Ovary (tissue), 10 donors: ENCODE measurements at regions of chr12 and their contacts with region 1.

Region 1: GRCh38 chr12:17763366-17763765 is 326.6 kb downstream of the RERGL start:
- DNase-seq: no peak
- H3K4me3 ChIP-seq: no peak overlapping the region
- H3K27ac ChIP-seq: no peak overlapping the region
- H3K4me1 ChIP-seq: no peaks in the 10 kb centered on the region
- H3K27me3 ChIP-seq: no peaks in the 10 kb centered on the region
- CTCF ChIP-seq: no peak
- EP300 ChIP-seq: no peak
- POLR2A ChIP-seq: no peak

Region 2: GRCh38 chr12:17652436-17652835 is 110.9 kb before region 1 on chr12:
- intact Hi-C with region 1: no loop called
- DNase-seq: no peak
- H3K4me3 ChIP-seq: no peak overlapping the region
- H3K27ac ChIP-seq: no peak overlapping the region
- H3K4me1 ChIP-seq: no peaks in the 10 kb centered on the region
- H3K27me3 ChIP-seq: no peaks in the 10 kb centered on the region
- CTCF ChIP-seq: no peak
- EP300 ChIP-seq: no peak
- POLR2A ChIP-seq: no peak

Region 3: GRCh38 chr12:17853054-17853453 is 89.7 kb after region 1 on chr12:
- intact Hi-C with region 1: loop called in 3 of 4 experiments (anchors 2 to 5 kb)
- DNase-seq: no peak
- H3K4me3 ChIP-seq: no peak overlapping the region
- H3K27ac ChIP-seq: no peak overlapping the region
- H3K4me1 ChIP-seq: no peaks in the 10 kb centered on the region
- H3K27me3 ChIP-seq: no peaks in the 10 kb centered on the region
- CTCF ChIP-seq: no peak
- EP300 ChIP-seq: no peak
- POLR2A ChIP-seq: no peak

Region 4: GRCh38 chr12:17928708-17929366 is 165.5 kb after region 1 on chr12:
- intact Hi-C with region 1: no loop called
- DNase-seq: no peak
- H3K4me3 ChIP-seq: no peak overlapping the region
- H3K27ac ChIP-seq: no peak overlapping the region
- H3K4me1 ChIP-seq: no peaks in the 10 kb centered on the region
- H3K27me3 ChIP-seq: no peaks in the 10 kb centered on the region
- CTCF ChIP-seq: no peak
- EP300 ChIP-seq: no peak
- POLR2A ChIP-seq: no peak

Region 5: DNA sequence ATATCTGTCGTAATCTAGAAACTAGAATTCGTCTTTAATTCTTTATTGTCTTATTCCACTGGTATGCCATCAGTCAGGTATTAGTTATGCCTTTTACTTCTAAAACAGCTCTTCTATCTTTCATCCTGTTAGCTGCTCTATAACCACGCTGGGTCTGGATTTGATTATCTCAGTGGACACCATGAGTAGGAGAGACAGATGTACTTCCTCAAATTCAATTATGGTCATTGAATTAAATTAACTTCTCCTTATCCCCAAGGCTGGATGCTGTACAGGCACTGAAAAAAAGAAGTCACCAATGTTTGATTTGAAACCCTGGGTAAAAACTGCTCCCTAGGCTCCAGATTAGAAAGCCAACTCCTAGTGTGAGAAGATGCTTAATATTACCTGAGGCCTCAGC is 605.2 kb after region 1 on chr12:
- intact Hi-C with region 1: no loop called
- DNase-seq: no peak
- H3K4me3 ChIP-seq: no peak overlapping the region
- H3K27ac ChIP-seq: no peak overlapping the region
- H3K4me1 ChIP-seq: no peaks in the 10 kb centered on the region
- H3K27me3 ChIP-seq: no peaks in the 10 kb centered on the region
- CTCF ChIP-seq: no peak
- EP300 ChIP-seq: no peak
- POLR2A ChIP-seq: no peak